Endothelial cell of umbilical vein (primary cell): ENCODE measurements at regions of chr5 and their contacts with region 1.

Region 1: GRCh38 chr5:74919487-74919886 is 53.3 kb upstream of the FAM169A start:
- DNase-seq: peak; percentile 65
- H3K4me3 ChIP-seq: no peak overlapping the region
- H3K27ac ChIP-seq: no peak overlapping the region
- H3K4me1 ChIP-seq: peaks cover 8% of the 10 kb centered on the region
- H3K27me3 ChIP-seq: no peaks in the 10 kb centered on the region
- CTCF ChIP-seq: peak; percentile 45 to 48
- POLR2A ChIP-seq: no peak

Region 2: GRCh38 chr5:74673011-74673790 is 246.3 kb before region 1 on chr5:
- CTCF ChIA-PET with region 1: interaction called, 48 read pairs
- POLR2A ChIA-PET with region 1: no interaction called
- dilution Hi-C with region 1: no loop called
- intact Hi-C with region 1: loop called (anchors 1 kb)
- DNase-seq: peak; percentile 34
- H3K4me3 ChIP-seq: no peak overlapping the region
- H3K27ac ChIP-seq: no peak overlapping the region
- H3K4me1 ChIP-seq: no peaks in the 10 kb centered on the region
- H3K27me3 ChIP-seq: peaks cover 3% of the 10 kb centered on the region in 2 experiments
- CTCF ChIP-seq: peak; percentile 7 to 23
- POLR2A ChIP-seq: no peak

Region 3: DNA sequence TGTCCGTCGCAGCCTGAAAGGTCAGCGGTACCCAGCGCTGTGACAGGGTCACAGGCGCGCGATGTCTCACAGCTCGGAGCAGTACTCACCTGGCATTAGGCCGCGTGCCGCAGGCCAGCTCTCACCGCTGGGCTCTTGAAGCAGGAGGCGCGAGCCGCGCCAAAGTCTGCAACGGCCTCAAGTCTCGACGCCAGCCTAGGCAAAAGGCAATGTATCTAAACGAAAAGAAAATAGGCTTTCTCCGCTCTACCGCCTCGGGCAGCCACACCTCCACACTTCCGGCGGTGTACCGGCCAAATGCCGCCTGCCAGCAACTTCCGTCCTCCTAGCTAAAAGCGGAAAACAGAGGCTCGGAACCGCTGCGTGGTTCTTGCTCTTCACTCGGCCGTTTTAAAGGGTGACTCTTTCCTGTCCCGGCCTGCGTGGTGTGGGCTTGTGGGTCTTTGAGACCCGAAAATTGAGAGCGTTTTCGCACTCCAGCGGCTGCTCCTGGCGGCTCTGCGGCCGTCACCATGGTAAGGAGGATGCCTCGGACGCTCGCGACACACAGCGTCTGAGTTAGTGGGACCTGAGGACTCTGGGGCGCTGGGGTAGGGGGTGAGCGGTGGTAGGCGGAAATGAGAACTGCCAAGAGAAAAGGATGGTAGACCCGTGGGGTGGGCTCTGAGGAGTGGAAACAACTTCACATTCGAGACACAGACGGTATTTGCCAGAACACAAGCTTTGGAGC is 152.5 kb before region 1 on chr5 and contains the starts of genes GFM2 and NSA2:
- CTCF ChIA-PET with region 1: no interaction called
- POLR2A ChIA-PET with region 1: no interaction called
- dilution Hi-C with region 1: no loop called
- intact Hi-C with region 1: loop called (anchors 1 kb)
- DNase-seq: peak; percentile 97
- H3K4me3 ChIP-seq: peak within 1 kb of the TSS; percentile 73 to 98 (median 86)
- H3K27ac ChIP-seq: peak within 1 kb of the TSS; percentile 16
- H3K4me1 ChIP-seq: peaks cover 17% of the 10 kb centered on the region
- H3K27me3 ChIP-seq: no peaks in the 10 kb centered on the region
- CTCF ChIP-seq: no peak
- POLR2A ChIP-seq: peak; percentile 63
- total RNA-seq, gene GFM2: 23.3 and 29.0 TPM in 2 replicates
- total RNA-seq, gene NSA2: 72.4 and 73.8 TPM in 2 replicates

Region 4: GRCh38 chr5:74934949-74935751 is 15.7 kb after region 1 on chr5:
- CTCF ChIA-PET with region 1: interaction called, 15 read pairs
- POLR2A ChIA-PET with region 1: no interaction called
- dilution Hi-C with region 1: no loop called
- intact Hi-C with region 1: no loop called
- DNase-seq: peak; percentile 95
- H3K4me3 ChIP-seq: peak overlapping the region in 1 of 3 experiments; percentile 6
- H3K27ac ChIP-seq: peak overlapping the region; percentile 13
- H3K4me1 ChIP-seq: peaks cover 24% of the 10 kb centered on the region
- H3K27me3 ChIP-seq: no peaks in the 10 kb centered on the region
- CTCF ChIP-seq: peak; percentile 23 to 37
- POLR2A ChIP-seq: no peak